H1 (cell line): ENCODE measurements at regions of chr12 and their contacts with region 1.

Region 1: DNA sequence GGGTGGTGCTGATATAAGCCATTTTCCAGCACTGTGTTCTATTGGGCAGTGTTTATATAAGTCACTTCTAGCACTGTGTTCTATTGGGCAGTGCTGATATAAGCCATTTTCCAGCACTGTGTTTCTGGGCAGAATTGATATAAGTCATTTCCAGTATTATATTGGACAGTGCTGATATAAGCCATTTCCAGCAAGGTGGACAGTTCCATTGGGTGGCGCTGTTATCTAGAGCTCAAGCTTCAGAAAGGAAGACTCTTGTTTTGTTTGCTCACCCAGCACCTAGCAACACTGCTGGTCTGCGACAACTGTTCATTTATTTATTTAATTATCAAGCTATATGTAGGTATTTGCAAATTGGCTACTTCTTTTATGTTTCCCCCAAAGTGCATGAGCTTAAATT is 690.3 kb downstream of the AACS start:
- DNase-seq: no peak
- H3K4me3 ChIP-seq: no peak overlapping the region
- H3K27ac ChIP-seq: no peak overlapping the region
- H3K4me1 ChIP-seq: no peaks in the 10 kb centered on the region
- H3K27me3 ChIP-seq: no peaks in the 10 kb centered on the region
- CTCF ChIP-seq: peak in 2 of 3 experiments; percentile 44 to 63; a peak in 3 of 4 replicates
- EP300 ChIP-seq: no peak
- POLR2A ChIP-seq: no peak
- RAD21 ChIP-seq: peak; percentile 71 to 72

Region 2: DNA sequence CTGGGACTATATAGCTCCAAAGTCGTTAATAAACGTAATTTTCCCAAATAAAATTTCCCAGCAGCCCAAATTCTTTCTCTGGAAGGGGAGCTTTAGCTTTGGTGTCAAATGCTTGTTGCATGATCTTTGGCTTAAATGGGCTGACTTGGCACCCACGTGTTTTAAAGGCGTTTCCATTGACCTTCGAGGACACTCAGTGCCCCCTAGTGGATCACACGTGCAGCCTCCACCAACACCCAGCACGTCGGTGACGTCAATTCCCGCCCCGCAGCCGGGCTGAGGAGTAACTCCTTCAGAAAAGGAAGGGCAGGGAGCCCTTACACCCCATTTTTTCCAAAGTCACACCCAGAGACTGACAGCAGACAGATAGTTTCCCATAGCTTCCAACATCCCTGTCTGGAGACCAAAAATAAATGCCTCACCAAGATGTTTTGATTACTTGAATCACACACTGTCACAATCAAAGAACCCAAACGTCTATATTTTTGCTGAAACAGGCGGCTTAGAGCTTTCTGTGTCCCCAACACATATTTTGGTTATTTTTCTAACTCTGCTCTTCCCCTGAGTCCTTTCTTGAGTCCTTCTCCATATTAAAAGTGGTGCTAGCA is 17.6 kb after region 1 on chr12:
- CTCF ChIA-PET with region 1: interaction called, 18 read pairs
- POLR2A ChIA-PET with region 1: no interaction called
- DNase-seq: peak; percentile 33 to 82
- H3K4me3 ChIP-seq: no peak overlapping the region
- H3K27ac ChIP-seq: no peak overlapping the region
- H3K4me1 ChIP-seq: no peaks in the 10 kb centered on the region
- H3K27me3 ChIP-seq: peaks cover 0 to 8% (median 0%) of the 10 kb centered on the region in 4 experiments; a peak in 4 of 7 replicates
- CTCF ChIP-seq: peak; percentile 73 to 83 (median 82)
- EP300 ChIP-seq: no peak
- POLR2A ChIP-seq: no peak
- RAD21 ChIP-seq: peak; percentile 71 to 80

Region 3: DNA sequence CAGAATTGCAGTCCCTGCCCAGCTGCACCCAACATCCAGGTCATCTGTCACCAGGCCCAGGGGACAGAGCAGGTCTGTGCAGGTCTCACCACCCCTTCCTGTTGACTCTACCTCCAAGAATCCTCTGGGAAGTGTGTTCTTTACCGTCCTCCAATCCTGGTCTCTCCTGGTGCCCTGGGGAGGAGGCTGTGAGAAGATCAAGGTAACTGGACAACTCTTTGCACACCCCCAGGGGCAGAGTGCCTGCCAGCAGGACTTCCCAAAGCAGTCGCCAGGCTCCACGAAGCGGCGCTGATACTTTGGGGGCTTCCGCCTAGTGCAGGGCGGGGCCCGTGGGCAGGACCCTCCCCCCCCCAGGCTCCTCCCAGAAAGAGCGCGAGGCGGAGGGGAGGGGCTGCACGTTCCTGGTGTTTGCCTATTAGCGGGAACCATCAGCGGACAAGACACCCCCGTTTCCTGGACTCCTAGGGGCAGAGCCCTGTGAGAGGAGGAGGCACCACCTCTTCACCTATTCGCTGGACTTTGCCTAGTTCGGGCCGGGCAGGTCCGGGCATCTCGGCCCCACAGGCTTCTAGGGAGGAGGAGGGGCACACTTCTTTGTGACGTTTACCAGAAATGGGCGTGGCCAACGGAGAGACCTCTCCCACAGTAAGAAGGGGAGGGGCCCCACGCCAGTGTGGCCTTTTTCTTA is 227.7 kb after region 1 on chr12:
- CTCF ChIA-PET with region 1: no interaction called
- POLR2A ChIA-PET with region 1: no interaction called
- DNase-seq: peak; percentile 85 to 94
- H3K4me3 ChIP-seq: peak overlapping the region; percentile 60 to 78 (median 70)
- H3K27ac ChIP-seq: peak overlapping the region; percentile 69
- H3K4me1 ChIP-seq: peaks cover 0 to 4% (median 4%) of the 10 kb centered on the region in 4 experiments; a peak in 6 of 7 replicates
- H3K27me3 ChIP-seq: peaks cover 0 to 3% (median 1%) of the 10 kb centered on the region in 4 experiments; a peak in 4 of 7 replicates
- CTCF ChIP-seq: peak in 1 of 3 experiments; percentile 18; a peak in 1 of 4 replicates
- EP300 ChIP-seq: no peak
- POLR2A ChIP-seq: no peak
- RAD21 ChIP-seq: peak in 1 of 2 experiments; percentile 14; a peak in 1 of 4 replicates